Activated CD4-positive, alpha-beta memory T cell treated with anti-CD3 and anti-CD28 coated beads for 36 hours (primary cell): ENCODE measurements at regions of chr10 and their contacts with region 1.

Region 1: DNA sequence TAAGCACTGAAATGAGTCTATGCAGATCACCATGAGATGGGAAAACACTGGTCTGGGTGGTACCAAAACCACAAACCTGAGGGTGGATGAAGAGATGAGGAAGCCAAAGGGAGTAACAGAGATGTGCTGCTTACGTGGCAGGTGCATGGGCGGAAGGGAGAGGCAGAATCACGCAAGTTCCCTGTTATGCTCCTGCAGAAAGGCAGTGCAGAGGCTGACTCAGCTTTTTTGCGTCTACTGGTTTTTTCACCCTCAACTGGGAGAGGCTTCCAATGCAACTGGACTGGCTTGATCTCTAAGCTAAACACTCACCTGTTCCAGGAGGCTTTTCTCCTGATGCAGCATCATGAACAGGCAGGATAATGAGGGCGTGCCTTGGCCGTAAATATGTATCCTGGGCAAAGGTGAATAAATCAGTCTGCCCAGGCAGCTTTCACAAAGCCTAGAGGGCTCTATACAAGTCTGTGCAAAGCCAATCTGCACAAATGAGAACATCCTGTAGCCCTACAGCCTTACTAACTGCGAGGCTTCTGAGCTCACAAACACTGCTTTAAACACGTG is 95.4 kb upstream of the AFAP1L2 start:
- DNase-seq: peak; percentile 92
- H3K4me3 Mint-ChIP-seq: peak overlapping the region; percentile 63
- H3K27ac Mint-ChIP-seq: peak overlapping the region; percentile 89
- H3K4me1 Mint-ChIP-seq: peaks cover 89% of the 10 kb centered on the region
- H3K27me3 Mint-ChIP-seq: no peaks in the 10 kb centered on the region

Region 2: DNA sequence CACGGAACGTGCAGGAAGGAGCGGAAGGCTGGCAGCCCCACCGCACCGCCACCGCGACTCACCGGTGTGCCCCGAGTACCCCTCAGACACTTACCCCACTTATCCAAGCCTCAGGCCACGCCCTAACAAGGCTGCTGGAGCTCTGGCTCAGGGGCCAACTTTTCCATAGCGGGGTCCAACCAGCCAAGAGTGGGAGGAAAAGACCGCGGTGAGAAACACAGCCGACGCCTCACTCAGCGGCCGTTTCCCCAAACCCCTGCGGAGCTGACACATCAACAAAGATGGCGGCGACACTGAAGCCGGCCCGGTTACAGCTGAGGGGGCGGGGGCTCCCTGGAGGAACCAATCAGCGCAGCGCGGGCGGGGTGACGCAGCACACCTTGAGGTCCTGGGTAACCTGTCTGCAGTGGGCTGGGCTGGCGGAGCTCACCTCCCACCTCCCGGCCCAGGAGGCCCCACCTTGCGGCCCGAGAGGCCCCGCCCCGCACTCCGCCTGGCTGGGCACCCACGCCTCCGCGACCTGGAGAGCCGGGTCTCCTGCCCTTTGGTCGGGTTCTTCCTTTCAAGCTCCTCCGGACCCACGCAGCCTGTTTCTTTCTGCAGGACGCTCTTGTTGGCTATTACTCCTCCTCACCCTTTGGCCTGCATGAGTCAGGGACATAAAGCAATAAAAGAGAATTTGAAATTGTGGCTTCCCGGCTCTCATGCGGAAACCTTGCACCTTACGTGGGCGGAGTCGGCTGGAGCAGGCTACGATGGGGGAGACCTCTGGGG is 325.6 kb before region 1 on chr10 and contains the start of gene CCDC186:
- CTCF ChIA-PET with region 1: no interaction called
- POLR2A ChIA-PET with region 1: no interaction called
- intact Hi-C with region 1: loop called (anchors 5 kb)
- DNase-seq: peak; percentile 99
- H3K4me3 Mint-ChIP-seq: peak within 1 kb of the TSS; percentile 93
- H3K27ac Mint-ChIP-seq: peak within 1 kb of the TSS; percentile 91
- H3K4me1 Mint-ChIP-seq: peaks cover 33% of the 10 kb centered on the region
- H3K27me3 Mint-ChIP-seq: no peaks in the 10 kb centered on the region
- total RNA-seq, gene CCDC186: 12.6 to 13.8 TPM

Region 3: DNA sequence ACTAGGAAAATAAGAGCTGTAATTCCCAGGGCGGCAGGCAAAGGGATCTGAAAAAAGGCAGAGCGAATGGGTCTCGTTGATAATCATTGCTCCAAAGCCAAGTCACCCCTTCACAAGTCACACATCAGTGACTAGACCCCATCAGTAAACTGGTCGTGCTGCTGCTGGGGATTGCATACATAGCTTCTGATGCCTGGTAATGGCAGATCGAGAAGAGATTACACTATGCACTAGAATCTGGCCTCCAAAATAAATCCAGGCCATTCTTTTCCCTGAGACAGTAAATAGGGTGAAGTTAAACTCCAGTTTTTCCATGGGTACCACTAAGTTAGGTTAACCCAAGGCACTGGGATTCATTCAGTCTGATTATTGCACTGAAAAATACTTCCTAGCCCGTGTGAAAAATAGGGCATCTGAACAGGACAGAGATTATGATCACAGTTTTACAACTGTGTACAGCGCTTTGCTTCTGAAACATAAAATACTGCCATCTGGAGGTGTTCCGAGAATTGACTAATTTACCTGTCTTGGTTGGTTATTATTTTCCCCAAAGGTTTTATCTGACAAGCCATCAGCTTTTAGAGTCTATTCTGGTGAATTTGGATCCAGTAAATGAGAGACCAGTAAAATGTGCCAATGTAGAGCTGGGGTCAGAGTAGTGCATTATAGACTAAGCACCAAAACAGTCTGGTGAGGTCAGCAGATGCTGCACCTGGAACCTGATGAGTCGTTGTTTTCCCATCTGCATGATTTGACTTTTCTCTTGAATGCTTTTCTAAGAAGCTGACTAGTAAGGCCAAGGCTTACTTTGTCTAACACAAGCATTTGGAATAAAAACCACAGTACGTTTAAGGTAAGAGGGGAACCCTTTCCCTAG is 12.5 kb before region 1 on chr10:
- CTCF ChIA-PET with region 1: interaction called, 28 read pairs
- POLR2A ChIA-PET with region 1: interaction called, 12 read pairs
- intact Hi-C with region 1: loop called (anchors 1 kb)
- DNase-seq: peak; percentile 63
- H3K4me3 Mint-ChIP-seq: no peak overlapping the region
- H3K27ac Mint-ChIP-seq: peak overlapping the region; percentile 85
- H3K4me1 Mint-ChIP-seq: peaks cover 53% of the 10 kb centered on the region
- H3K27me3 Mint-ChIP-seq: no peaks in the 10 kb centered on the region

Region 4: GRCh38 chr10:114520453-114520852 is 20.7 kb after region 1 on chr10:
- CTCF ChIA-PET with region 1: interaction called, 7 read pairs
- POLR2A ChIA-PET with region 1: interaction called, 47 read pairs
- intact Hi-C with region 1: loop called (anchors 1 kb)
- DNase-seq: no peak
- H3K4me3 Mint-ChIP-seq: no peak overlapping the region
- H3K27ac Mint-ChIP-seq: peak overlapping the region; percentile 65
- H3K4me1 Mint-ChIP-seq: peaks cover 90% of the 10 kb centered on the region
- H3K27me3 Mint-ChIP-seq: no peaks in the 10 kb centered on the region